AG04450 (cell line): ENCODE measurements at regions of chr3 and their contacts with region 1.

Region 1: DNA sequence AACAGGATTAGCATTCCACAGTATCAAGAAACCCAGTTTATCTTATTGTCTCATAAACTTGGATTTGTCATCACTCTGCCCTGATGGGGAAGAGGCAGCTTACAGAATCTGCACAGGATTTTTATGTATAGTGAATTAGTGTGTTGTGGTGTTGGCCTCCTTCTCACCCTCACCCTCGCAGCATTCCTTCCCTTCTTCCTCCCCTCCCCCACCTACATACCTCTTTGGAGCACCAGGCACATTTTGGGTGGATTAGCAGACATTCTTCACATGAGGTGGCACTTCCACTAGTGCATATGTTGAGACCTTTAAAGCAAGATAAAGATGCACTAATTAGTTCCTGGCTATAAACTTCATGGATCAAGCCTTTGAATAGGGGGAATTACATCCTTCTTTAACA is 13.9 kb downstream of the ITGB5 start:
- DNase-seq: no peak
- H3K4me3 ChIP-seq: no peak overlapping the region
- H3K27ac ChIP-seq: no peak overlapping the region
- H3K27me3 ChIP-seq: no peaks in the 10 kb centered on the region
- CTCF ChIP-seq: no peak

Region 2: DNA sequence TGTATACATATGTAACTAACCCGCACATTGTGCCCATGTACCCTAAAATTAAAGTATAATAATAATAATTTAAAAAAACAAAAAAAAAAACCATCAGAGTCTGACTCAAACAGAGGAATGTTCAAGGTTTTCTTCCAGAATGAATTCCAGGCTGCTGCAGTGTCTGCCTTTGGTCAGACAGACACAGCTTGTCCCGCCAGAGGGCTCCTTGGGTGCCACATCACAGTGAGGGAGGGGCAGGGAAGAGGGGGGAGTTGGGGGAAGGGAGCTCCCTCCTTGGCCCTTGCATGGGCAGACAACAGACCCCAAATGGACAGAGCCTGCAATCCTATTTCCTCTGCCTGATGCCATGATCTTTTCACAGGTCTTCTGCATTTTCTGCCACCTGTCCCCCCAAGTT is 22.6 kb before region 1 on chr3:
- CTCF ChIA-PET with region 1: interaction called, 10 read pairs
- POLR2A ChIA-PET with region 1: no interaction called
- DNase-seq: no peak
- H3K4me3 ChIP-seq: no peak overlapping the region
- H3K27ac ChIP-seq: no peak overlapping the region
- H3K27me3 ChIP-seq: no peaks in the 10 kb centered on the region
- CTCF ChIP-seq: peak; percentile 21; the same call in 1 of the 2 replicates

Region 3: DNA sequence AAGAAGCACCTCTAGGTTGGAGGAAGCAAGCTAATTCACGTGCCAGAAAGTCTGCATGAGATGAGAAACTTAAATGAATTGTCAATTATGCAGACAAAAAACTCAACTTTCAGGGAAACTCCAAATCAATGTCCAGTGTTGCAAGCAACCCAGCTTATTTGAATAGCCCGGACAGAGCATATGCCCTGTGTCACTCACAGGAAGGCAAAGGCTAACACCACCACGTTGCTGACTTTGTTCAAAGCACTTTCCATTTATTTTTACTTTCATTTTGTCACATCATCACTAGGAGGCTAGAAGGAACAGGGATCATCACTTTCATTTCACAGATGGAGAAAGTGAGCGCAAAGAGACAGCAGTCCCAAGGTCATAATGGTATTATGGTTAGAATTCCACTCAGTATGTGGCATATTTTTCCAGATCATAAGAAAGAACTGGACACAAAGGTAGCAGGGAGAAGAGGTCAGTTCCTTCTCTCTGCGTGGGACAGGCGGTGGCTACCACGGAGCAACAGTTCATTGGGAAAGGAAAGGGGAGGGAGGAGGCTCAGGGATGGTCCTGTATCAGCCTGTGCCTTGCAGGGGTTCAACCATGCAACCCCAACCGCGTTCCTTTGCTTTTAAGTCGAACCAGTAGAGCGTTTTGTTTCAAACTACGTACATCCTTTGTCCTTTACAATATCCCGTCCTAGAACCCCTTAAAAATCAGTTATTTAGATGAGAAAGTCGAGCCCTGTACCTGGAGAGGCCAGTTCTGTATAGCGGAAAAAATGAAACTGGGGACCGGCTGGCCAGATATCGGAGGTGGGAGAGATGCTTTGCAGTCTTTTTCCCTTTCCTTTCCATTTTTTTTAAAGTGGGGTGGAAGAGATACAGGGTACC is 181.5 kb after region 1 on chr3:
- CTCF ChIA-PET with region 1: no interaction called
- POLR2A ChIA-PET with region 1: no interaction called
- DNase-seq: no peak
- H3K4me3 ChIP-seq: peak overlapping the region; percentile 71
- H3K27ac ChIP-seq: peak overlapping the region; percentile 71
- H3K27me3 ChIP-seq: no peaks in the 10 kb centered on the region
- CTCF ChIP-seq: peak; percentile 35; the same call in 1 of the 2 replicates

Region 4: GRCh38 chr3:125186261-125186787 is 313.1 kb after region 1 on chr3:
- CTCF ChIA-PET with region 1: interaction called, 14 read pairs
- POLR2A ChIA-PET with region 1: no interaction called
- DNase-seq: no peak
- H3K4me3 ChIP-seq: no peak overlapping the region
- H3K27ac ChIP-seq: no peak overlapping the region
- H3K27me3 ChIP-seq: no peaks in the 10 kb centered on the region
- CTCF ChIP-seq: no peak